ENCODE measurements at regions of chr12 and their contacts with region 1.

Region 1: GRCh38 chr12:38689704-38690103 is 215.7 kb downstream of the CPNE8 start:
- DNase-seq: no peak
- ATAC-seq: no peak
- H3K4me3 ChIP-seq: no peak overlapping the region
- H3K27ac ChIP-seq: no peak overlapping the region
- H3K4me1 ChIP-seq: no peaks in the 10 kb centered on the region
- H3K27me3 ChIP-seq: no peaks in the 10 kb centered on the region
- CTCF ChIP-seq: no peak

Region 2: DNA sequence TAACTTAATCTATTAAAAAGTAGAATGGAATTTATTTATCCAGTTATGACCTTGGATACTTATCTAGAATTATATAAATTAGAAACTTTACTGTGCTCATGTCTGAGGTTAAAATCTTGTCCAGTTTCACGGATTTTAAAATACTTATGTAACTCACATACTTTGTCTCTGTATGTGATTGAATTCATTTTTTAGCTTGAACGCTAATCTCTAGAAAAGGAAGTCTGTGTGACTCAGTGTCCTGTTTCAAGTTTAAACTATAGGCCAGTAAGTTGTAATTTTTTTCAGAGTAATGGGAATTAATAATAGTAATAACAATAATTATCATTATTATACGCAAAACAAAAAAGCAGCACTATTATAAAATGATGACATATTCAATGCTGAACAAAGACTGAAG is 47.1 kb after region 1 on chr12:
- CTCF ChIA-PET with region 1: no interaction called
- POLR2A ChIA-PET with region 1: no interaction called
- in situ Hi-C with region 1: no loop called
- intact Hi-C with region 1: loop called (anchors 10 kb)
- DNase-seq: no peak
- ATAC-seq: no peak
- H3K4me3 ChIP-seq: no peak overlapping the region
- H3K27ac ChIP-seq: no peak overlapping the region
- H3K4me1 ChIP-seq: no peaks in the 10 kb centered on the region
- H3K27me3 ChIP-seq: no peaks in the 10 kb centered on the region
- CTCF ChIP-seq: no peak

Region 3: DNA sequence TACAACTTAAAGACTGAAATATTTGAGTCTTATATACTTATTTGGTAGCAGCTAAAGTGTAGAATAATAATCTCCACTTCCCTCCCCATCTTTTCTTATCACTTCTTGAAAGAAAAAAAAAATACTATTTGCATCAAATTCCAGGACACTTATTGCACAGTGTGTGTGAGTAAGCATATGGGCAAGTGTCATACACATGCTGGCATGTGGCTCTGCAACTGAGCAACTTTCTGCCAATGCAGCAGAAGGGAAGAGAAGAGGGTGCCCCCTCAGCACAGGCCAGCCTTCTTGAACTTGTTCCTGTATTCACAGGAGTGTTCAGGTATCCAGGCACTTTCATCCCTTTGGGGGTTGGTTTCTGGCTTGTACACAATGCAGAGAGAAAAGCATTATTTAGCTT is 69.9 kb after region 1 on chr12:
- CTCF ChIA-PET with region 1: no interaction called
- POLR2A ChIA-PET with region 1: interaction called, 15 read pairs
- in situ Hi-C with region 1: no loop called
- intact Hi-C with region 1: no loop called
- DNase-seq: no peak
- ATAC-seq: no peak
- H3K4me3 ChIP-seq: no peak overlapping the region
- H3K27ac ChIP-seq: no peak overlapping the region
- H3K4me1 ChIP-seq: no peaks in the 10 kb centered on the region
- H3K27me3 ChIP-seq: no peaks in the 10 kb centered on the region
- CTCF ChIP-seq: no peak

Measured in Panc1 (cell line).